ENCODE measurements at regions of chr4 and their contacts with region 1.

Region 1: GRCh38 chr4:152807294-152807829 is 27.6 kb downstream of the ARFIP1 start:
- DNase-seq: no peak
- ATAC-seq: no peak
- H3K4me3 ChIP-seq: no peak overlapping the region
- H3K4me3 Mint-ChIP-seq: peak overlapping the region in 1 of 10 donors; percentile 52
- H3K27ac ChIP-seq: no peak overlapping the region
- H3K27ac Mint-ChIP-seq: peak overlapping the region in 1 of 9 donors; percentile 58
- H3K4me1 ChIP-seq: no peaks in the 10 kb centered on the region
- H3K4me1 Mint-ChIP-seq: peaks cover 4 to 24% (median 10%) of the 10 kb centered on the region in 7 donors
- H3K27me3 ChIP-seq: no peaks in the 10 kb centered on the region
- H3K27me3 Mint-ChIP-seq: no peaks in the 10 kb centered on the region

Region 2: DNA sequence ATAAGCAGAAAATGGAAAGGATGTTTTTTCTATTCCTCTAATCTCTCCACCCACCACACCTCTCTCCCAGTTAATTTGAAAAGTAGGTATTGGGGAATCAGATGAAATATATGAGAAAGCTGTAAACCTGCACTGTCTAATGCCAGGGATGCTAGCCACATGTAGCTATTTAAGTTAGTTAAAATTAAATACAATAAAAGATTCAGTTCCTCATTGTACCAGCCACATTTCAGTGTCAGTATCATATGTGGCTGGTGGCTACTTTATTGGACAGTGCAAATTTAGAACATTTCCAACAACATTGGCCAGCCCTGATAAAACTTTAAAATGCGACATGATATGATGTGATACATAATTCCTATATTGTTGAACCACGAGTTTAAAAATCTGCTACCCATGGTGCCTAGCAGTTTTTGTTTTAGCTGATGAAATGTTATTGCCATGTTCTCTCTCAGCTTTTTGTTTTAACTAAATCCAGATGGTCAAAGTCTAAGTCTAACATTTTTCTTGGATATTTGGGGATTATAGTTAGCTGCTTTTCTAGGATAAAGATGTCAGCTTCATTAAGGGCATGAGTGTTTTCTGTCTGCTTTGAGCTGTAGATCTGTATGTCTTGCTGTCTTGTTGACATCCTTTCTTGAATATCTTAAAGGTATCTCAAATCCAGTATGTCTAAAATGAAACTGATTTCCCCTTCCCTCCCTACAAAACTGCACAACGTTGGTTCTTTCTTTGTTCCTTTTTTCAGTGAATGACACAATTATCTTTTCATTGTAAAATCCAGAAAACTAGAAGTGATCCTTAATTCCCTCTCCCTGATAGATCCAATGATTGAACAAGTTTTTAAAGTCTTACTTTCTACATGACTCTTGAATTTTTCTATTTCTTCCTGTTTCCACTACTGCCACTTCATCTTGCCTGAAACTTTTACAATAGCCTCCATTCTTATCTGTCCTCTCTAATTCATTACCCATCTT is 21.4 kb before region 1 on chr4:
- CTCF ChIA-PET with region 1: no interaction called
- POLR2A ChIA-PET with region 1: no interaction called
- intact Hi-C with region 1: loop called in 1 of 2 experiments (anchors 2 kb)
- DNase-seq: no peak
- ATAC-seq: peak; percentile 18
- H3K4me3 ChIP-seq: no peak overlapping the region
- H3K4me3 Mint-ChIP-seq: peak overlapping the region; percentile 4 to 76 (median 58)
- H3K27ac ChIP-seq: peak overlapping the region; percentile 37
- H3K27ac Mint-ChIP-seq: peak overlapping the region; percentile 62 to 86 (median 74)
- H3K4me1 ChIP-seq: peaks cover 6 to 15% of the 10 kb centered on the region in 2 donors
- H3K4me1 Mint-ChIP-seq: peaks cover 32 to 58% (median 41%) of the 10 kb centered on the region in 7 donors
- H3K27me3 ChIP-seq: no peaks in the 10 kb centered on the region
- H3K27me3 Mint-ChIP-seq: no peaks in the 10 kb centered on the region